ENCODE measurements at regions of chr14 and their contacts with region 1.

Region 1: DNA sequence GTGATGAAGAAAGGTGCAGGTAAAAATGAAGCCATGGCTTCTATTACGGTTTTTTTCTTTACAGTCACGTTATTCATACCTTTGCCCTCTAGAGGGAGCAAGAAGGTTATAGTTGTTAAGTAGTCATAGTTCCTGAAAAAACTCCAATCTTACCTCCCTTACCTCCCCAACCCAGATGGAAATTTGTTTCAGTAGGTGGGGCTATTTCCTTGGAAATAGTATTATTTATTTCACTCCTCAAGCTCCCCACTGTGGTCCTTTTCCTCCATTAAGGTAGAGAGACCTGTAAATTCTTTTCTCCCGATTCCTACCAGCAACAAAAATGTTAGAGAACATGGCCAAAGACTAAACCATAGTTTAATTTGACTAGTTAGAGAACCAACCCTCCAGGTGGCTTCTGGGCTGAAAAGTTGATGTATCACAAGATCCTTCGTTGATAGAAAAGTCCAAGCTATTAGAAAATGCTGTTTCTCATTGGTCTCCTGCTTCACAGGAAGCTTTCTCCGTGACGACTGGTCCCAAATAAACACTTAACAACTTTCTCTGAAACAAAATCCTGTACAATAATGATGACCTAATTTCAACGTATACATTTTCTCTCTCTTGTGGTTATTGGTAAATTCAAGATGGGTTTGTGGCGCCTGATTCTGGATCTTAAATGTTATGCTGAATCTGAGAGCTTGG is 43.5 kb downstream of the TMX1 start:
- DNase-seq: peak in 2 of 42 donors; percentile 13 to 15

Region 2: DNA sequence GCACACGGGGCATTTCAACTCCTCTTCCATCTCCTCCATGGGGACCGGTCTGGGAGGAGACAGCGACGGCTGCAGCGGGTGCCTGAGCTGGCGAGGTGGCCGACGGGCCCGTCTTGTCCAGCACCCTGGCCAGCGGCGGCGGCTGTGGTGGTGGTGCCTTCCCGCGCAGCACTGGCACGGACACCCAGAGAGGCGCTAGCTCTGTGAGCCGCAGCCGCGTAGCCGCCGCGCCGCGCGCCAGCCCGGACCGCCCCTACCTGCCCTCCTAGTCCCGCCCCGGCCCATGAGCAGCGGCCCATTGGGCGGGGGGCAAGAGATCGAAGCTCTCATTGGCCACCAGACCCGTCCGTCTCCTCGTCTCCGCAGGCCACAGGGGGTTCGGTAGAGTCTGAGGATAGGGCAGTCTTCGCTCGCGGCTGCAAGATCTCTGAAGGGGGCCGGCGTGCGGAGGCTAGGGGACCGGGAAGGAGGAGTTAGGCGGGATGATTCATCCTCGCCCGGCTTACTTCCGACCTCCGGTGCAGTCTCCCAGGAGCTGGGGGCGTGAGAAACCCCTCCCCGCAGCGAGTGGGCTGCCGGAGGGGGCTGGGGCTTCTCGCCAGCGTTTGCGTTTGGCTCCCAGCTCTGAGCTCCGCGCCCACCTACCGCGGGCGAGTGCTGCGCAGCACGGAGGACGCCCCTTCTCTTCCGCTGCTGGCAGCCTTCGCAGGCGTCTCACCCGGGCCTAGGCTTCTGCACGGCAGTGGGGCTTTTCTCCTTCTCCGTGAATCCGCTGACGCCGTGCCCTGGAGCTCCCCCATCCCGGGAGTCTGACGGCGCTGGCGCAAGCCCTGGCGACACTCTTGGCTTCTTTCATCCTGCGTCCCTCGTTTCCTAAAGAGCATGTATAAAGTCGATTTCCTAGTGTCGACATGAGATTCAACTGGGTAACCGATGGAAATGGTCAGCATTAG is 188.4 kb before region 1 on chr14 and contains the start of gene TRIM9:
- intact Hi-C with region 1: no loop called
- DNase-seq: peak; percentile 98 to 100 (median 99)

Region 3: GRCh38 chr14:51651388-51652167 is 368.0 kb after region 1 on chr14 and contains the start of gene FRMD6:
- intact Hi-C with region 1: loop called (anchors 5 kb)
- DNase-seq: peak; percentile 46 to 90 (median 80)

Region 4: DNA sequence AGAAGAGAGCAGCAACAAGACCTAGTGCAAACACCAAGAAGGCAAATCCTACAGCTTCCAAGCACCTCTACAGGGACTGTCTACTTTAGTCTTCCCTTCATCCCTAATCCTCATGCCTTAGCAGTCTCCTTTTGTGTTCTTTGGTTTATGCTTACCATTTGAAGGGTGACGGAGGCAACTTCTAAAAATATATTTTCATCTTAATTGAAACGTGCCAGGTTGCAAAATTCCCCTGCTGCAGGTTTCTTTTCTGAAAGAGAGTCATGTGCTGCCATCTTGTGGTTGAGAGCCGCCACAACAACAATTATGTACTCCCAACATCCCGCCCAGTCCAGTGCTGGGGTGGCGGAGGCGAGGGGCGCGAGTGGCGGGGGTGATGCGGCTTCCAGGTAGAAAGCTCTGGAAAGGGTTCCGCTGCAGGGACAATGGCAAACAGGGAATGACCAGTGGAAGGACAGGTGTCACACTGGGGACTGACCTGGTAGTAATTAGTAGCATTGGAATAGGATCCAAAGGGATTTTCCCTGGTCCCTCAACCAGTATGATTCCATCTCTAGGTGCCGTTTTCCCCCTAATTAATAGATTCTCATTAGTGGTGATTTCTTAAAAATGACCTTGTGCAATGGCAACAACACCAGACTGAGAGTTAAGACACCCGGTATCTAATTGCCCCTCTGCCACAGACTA is 496.6 kb after region 1 on chr14:
- intact Hi-C with region 1: loop called (anchors 5 kb)
- DNase-seq: peak; percentile 32 to 91 (median 76)